CD14-positive monocyte (primary cell): ENCODE measurements at regions of chr15 and their contacts with region 1.

Region 1: DNA sequence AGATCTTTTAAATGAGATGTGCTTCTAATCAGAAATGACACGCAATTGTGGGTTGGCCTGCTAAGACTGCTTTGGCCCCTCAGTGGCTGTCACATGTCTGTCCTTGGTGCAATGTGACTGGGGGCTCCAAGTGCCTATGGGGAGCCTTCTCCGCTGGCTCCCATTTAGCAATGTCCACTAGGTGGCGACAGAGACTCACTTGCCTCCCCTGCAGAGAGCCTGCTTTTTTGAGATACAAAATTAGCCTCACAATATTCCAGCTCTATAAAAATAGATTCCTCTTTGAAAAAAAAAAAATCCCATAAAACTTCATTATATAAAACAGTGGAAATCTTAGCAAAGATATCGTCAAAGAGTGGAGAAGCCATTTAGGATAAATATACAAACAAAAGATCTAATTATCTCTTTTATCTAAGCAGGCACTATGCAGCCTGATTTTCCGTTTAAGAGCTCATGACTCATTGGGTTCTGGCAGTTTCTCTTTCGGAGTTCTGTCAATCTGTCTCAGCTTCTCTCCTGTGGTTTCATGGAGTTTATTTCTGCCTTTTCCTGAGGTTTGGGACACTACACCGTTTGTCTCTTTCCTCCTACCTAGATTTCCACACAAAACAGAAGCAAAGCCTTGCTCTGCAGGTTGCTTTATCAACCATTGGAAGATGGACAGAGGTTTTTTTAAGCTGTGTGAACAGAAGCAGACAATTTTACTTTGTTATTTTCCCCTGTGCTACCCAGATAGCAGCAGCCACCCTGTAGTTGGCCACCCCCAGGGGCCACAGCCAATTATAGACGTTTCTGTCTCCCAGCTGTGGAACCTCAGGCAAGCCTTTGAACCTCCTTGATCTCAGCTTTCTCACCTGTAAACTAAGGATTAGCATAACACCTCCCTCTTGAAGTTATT is 68.4 kb upstream of the TNFAIP8L3 start:
- DNase-seq: peak; percentile 68 to 79 (median 75)
- H3K4me3 ChIP-seq: peak overlapping the region in 2 of 3 experiments; percentile 42 to 52
- H3K4me3 Mint-ChIP-seq: peak overlapping the region; percentile 21 to 84
- H3K27ac ChIP-seq: peak overlapping the region in 1 of 2 donors; percentile 25
- H3K27ac Mint-ChIP-seq: peak overlapping the region in 4 of 7 donors; percentile 38 to 74 (median 48)
- H3K4me1 ChIP-seq: peaks cover 18 to 21% of the 10 kb centered on the region in 2 donors
- H3K4me1 Mint-ChIP-seq: peaks cover 20% of the 10 kb centered on the region
- H3K27me3 ChIP-seq: peaks cover 0 to 4% of the 10 kb centered on the region in 2 donors
- H3K27me3 Mint-ChIP-seq: no peaks in the 10 kb centered on the region
- CTCF ChIP-seq: peak; percentile 98

Region 2: GRCh38 chr15:50697109-50697797 is 465.9 kb before region 1 on chr15:
- intact Hi-C with region 1: no loop called
- DNase-seq: no peak
- H3K4me3 ChIP-seq: no peak overlapping the region
- H3K4me3 Mint-ChIP-seq: no peak overlapping the region
- H3K27ac ChIP-seq: no peak overlapping the region
- H3K27ac Mint-ChIP-seq: peak overlapping the region in 1 of 7 donors; percentile 15
- H3K4me1 ChIP-seq: no peaks in the 10 kb centered on the region
- H3K4me1 Mint-ChIP-seq: no peaks in the 10 kb centered on the region
- H3K27me3 ChIP-seq: no peaks in the 10 kb centered on the region
- H3K27me3 Mint-ChIP-seq: peaks cover 0 to 3% (median 0%) of the 10 kb centered on the region in 3 donors
- CTCF ChIP-seq: no peak

Region 3: DNA sequence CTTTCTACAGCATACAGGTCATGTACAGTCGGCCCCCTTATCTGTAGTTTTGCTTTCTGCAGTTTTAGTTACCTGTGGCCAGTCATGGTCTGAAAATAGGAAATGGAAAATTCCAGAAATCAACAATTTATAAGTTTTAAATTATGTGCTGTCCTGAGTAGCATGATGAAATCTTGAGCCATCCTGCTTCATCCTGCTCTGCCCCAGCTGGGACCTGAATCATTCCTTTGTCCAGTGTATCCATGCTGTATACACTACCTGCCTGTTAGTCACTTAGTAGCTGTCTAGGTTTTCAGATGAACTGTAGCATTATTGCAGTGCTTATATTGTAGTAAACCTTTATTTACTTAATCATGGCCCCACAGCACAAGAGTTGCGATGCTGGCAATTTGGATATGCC is 209.8 kb before region 1 on chr15:
- intact Hi-C with region 1: no loop called
- DNase-seq: no peak
- H3K4me3 ChIP-seq: no peak overlapping the region
- H3K4me3 Mint-ChIP-seq: no peak overlapping the region
- H3K27ac ChIP-seq: no peak overlapping the region
- H3K27ac Mint-ChIP-seq: no peak overlapping the region
- H3K4me1 ChIP-seq: no peaks in the 10 kb centered on the region
- H3K4me1 Mint-ChIP-seq: no peaks in the 10 kb centered on the region
- H3K27me3 ChIP-seq: no peaks in the 10 kb centered on the region
- H3K27me3 Mint-ChIP-seq: no peaks in the 10 kb centered on the region
- CTCF ChIP-seq: no peak

Region 4: GRCh38 chr15:51281368-51281967 is 118.4 kb after region 1 on chr15:
- intact Hi-C with region 1: loop called (anchors 10 kb)
- DNase-seq: peak; percentile 48 to 58 (median 53)
- H3K4me3 ChIP-seq: no peak overlapping the region
- H3K4me3 Mint-ChIP-seq: no peak overlapping the region
- H3K27ac ChIP-seq: no peak overlapping the region
- H3K27ac Mint-ChIP-seq: peak overlapping the region in 1 of 7 donors; percentile 63
- H3K4me1 ChIP-seq: peaks cover 13 to 19% of the 10 kb centered on the region in 2 donors
- H3K4me1 Mint-ChIP-seq: peaks cover 16% of the 10 kb centered on the region
- H3K27me3 ChIP-seq: no peaks in the 10 kb centered on the region
- H3K27me3 Mint-ChIP-seq: peaks cover 5 to 6% (median 6%) of the 10 kb centered on the region in 3 donors
- CTCF ChIP-seq: peak; percentile 75

Region 5: GRCh38 chr15:51380999-51381795 is 218.1 kb after region 1 on chr15:
- intact Hi-C with region 1: loop called (anchors 1 to 2 kb)
- DNase-seq: peak; percentile 66 to 79 (median 74)
- H3K4me3 ChIP-seq: no peak overlapping the region
- H3K4me3 Mint-ChIP-seq: no peak overlapping the region
- H3K27ac ChIP-seq: no peak overlapping the region
- H3K27ac Mint-ChIP-seq: no peak overlapping the region
- H3K4me1 ChIP-seq: no peaks in the 10 kb centered on the region
- H3K4me1 Mint-ChIP-seq: peaks cover 3% of the 10 kb centered on the region
- H3K27me3 ChIP-seq: peaks cover 0 to 5% of the 10 kb centered on the region in 2 donors
- H3K27me3 Mint-ChIP-seq: peaks cover 4 to 10% (median 5%) of the 10 kb centered on the region in 3 donors
- CTCF ChIP-seq: peak; percentile 83

Region 6: DNA sequence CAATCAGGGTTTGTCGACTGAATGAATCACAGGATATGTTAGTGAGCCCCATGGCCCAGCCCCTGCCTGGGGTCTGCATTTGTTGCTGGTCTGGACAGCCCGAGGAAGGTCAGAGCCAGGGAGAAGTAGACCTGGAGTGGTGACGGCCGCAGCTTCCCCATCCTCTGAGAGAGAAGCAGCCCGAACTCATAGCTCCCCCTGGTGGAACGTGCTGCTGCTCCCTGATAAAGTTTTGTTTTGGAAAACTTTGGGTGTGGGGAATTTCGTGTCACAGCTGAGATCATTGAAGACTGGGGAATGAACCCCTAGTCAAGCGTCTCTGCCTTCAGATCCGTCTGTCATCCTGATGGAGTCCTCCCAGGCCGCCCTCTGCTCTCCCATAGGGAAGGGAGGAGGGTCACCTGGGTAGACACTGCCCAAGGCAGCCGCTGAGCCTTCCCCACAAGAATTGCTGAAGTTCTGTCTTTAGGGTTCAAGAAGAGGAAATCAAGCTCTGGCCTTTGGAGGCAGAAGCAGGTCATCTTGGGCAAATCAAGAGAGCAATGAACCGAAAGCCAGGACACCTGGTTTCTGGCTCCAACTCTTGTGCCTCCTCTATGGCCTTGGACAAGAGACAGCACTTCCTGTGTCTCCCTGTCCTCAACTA is 238.9 kb after region 1 on chr15:
- intact Hi-C with region 1: loop called in 1 of 2 experiments (anchors 5 kb)
- DNase-seq: peak; percentile 23 to 55 (median 48)
- H3K4me3 ChIP-seq: no peak overlapping the region
- H3K4me3 Mint-ChIP-seq: no peak overlapping the region
- H3K27ac ChIP-seq: no peak overlapping the region
- H3K27ac Mint-ChIP-seq: no peak overlapping the region
- H3K4me1 ChIP-seq: peaks cover 0 to 3% of the 10 kb centered on the region in 2 donors
- H3K4me1 Mint-ChIP-seq: peaks cover 10% of the 10 kb centered on the region
- H3K27me3 ChIP-seq: peaks cover 12 to 20% of the 10 kb centered on the region in 2 donors
- H3K27me3 Mint-ChIP-seq: peaks cover 13 to 20% (median 20%) of the 10 kb centered on the region in 3 donors
- CTCF ChIP-seq: peak; percentile 84